GM12878 (cell line): ENCODE measurements at regions of chr11 and their contacts with region 1.

Region 1: GRCh38 chr11:7513234-7514098 is at the start of gene PPFIBP2:
- DNase-seq: no peak
- ATAC-seq: peak; percentile 80
- H3K4me3 ChIP-seq: peak within 1 kb of the TSS; percentile 92
- H3K27ac ChIP-seq: peak within 1 kb of the TSS; percentile 99
- H3K4me1 ChIP-seq: peaks cover 22% of the 10 kb centered on the region
- H3K27me3 ChIP-seq: no peaks in the 10 kb centered on the region
- CTCF ChIP-seq: peak; percentile 73 to 91 (median 81)
- EP300 ChIP-seq: peak; percentile 19 to 30; a peak in 3 of 4 replicates
- POLR2A ChIP-seq: peak; percentile 84
- RAD21 ChIP-seq: peak; percentile 90
- polyA plus RNA-seq, gene PPFIBP2: 17.3 to 22.3 TPM

Region 2: GRCh38 chr11:7088921-7089320 is 424.5 kb before region 1 on chr11 and contains the start of gene RBMXL2:
- CTCF ChIA-PET with region 1: no interaction called
- POLR2A ChIA-PET with region 1: no interaction called
- RAD21 ChIA-PET with region 1: no interaction called
- SMC1A ChIA-PET with region 1: no interaction called
- in situ Hi-C with region 1: no loop called
- intact Hi-C with region 1: no loop called
- DNase-seq: no peak
- ATAC-seq: no peak
- H3K4me3 ChIP-seq: no peak within 1 kb of the TSS
- H3K27ac ChIP-seq: no peak within 1 kb of the TSS
- H3K4me1 ChIP-seq: no peaks in the 10 kb centered on the region
- H3K27me3 ChIP-seq: no peaks in the 10 kb centered on the region; a peak in 1 of 4 replicates
- CTCF ChIP-seq: no peak
- EP300 ChIP-seq: no peak
- POLR2A ChIP-seq: no peak
- RAD21 ChIP-seq: no peak
- polyA plus RNA-seq, gene RBMXL2: not detected

Region 3: DNA sequence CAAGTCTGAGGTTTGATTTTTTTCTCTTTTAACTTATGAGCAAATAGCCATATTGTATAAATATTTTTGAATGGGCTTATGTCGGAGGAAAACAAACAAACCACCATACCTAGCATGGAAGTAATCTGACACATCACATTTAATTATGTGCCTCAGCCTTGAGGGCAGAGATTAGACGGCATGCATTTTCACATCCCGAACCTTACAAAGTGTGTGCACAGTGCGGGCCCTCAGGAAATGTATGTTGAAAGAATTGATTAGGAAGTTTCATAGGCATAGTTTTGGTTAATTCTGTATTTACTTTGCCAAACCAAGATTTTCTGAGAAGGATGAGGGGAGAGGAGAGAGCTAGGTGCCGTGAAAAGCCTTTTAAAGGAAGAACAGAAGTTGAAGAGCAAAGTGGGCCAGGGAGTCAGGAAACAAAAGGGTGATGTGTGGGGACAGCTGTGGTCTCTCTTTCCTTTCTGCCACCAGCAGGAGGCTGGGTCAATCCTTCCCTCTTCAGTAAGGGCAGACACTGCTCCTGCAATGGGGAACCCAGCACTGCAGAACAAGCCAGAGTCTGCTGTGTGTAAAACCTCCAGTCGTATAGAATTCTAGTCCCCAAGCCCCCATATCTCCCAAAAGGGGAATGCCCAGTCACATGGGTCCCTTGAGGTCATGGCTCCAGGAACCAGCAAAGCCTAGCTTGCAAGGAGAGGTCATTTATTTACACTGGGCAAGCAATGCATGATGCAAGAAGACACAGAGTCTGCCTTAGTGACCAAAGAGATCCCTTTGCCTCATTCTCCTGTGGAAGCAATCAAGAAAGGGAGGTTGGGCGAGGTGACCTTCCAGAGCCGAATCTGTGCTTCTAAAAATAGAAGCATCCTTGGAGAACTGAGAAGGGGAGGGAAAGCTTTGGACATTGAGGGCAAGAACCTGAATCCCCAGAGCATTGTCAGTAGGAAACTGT is 99.2 kb before region 1 on chr11:
- CTCF ChIA-PET with region 1: no interaction called
- POLR2A ChIA-PET with region 1: no interaction called
- RAD21 ChIA-PET with region 1: no interaction called
- SMC1A ChIA-PET with region 1: no interaction called
- in situ Hi-C with region 1: no loop called
- intact Hi-C with region 1: no loop called
- DNase-seq: no peak
- ATAC-seq: peak; percentile 43; the same call in 2 of the 3 replicates
- H3K4me3 ChIP-seq: no peak overlapping the region
- H3K27ac ChIP-seq: no peak overlapping the region
- H3K4me1 ChIP-seq: no peaks in the 10 kb centered on the region
- H3K27me3 ChIP-seq: no peaks in the 10 kb centered on the region; a peak in 1 of 4 replicates
- CTCF ChIP-seq: no peak
- EP300 ChIP-seq: no peak
- POLR2A ChIP-seq: no peak
- RAD21 ChIP-seq: no peak

Region 4: DNA sequence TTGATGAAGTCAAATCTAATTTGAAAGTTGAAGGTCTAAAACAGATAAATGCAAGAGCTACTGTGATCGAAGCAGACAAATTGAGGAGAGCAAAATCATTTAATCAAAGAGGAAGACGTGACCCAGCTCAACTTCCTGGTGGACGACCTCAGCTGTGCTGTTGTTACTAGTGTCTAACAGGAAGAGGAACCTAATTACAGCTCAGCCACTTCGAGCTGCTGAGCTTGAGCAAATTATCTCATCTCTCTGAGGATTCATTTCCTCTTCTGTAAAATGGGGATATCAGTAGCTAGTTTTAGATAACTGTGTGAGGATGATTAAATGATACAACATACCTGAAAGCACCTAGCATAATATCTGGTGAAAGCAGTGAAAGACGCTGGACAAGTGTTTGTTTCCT is 76.8 kb before region 1 on chr11:
- CTCF ChIA-PET with region 1: interaction called, 11 read pairs
- POLR2A ChIA-PET with region 1: no interaction called
- RAD21 ChIA-PET with region 1: interaction called, 7 read pairs
- SMC1A ChIA-PET with region 1: interaction called, 6 read pairs
- in situ Hi-C with region 1: no loop called
- intact Hi-C with region 1: no loop called
- DNase-seq: no peak
- ATAC-seq: peak; percentile 89
- H3K4me3 ChIP-seq: no peak overlapping the region
- H3K27ac ChIP-seq: no peak overlapping the region
- H3K4me1 ChIP-seq: 0 out of 2 replicates have a peak, but pooled peaks cover 5% of the 10 kb centered on the region
- H3K27me3 ChIP-seq: no peaks in the 10 kb centered on the region
- CTCF ChIP-seq: no peak
- EP300 ChIP-seq: no peak
- POLR2A ChIP-seq: no peak
- RAD21 ChIP-seq: no peak

Region 5: GRCh38 chr11:7457211-7457610 is 56.3 kb before region 1 on chr11:
- CTCF ChIA-PET with region 1: interaction called, 11 read pairs
- POLR2A ChIA-PET with region 1: no interaction called
- RAD21 ChIA-PET with region 1: interaction called, 4 read pairs
- SMC1A ChIA-PET with region 1: interaction called, 10 read pairs
- in situ Hi-C with region 1: no loop called
- intact Hi-C with region 1: no loop called
- DNase-seq: no peak
- ATAC-seq: no peak
- H3K4me3 ChIP-seq: no peak overlapping the region
- H3K27ac ChIP-seq: no peak overlapping the region
- H3K4me1 ChIP-seq: no peaks in the 10 kb centered on the region
- H3K27me3 ChIP-seq: no peaks in the 10 kb centered on the region
- CTCF ChIP-seq: no peak
- EP300 ChIP-seq: no peak
- POLR2A ChIP-seq: no peak
- RAD21 ChIP-seq: no peak

Region 6: DNA sequence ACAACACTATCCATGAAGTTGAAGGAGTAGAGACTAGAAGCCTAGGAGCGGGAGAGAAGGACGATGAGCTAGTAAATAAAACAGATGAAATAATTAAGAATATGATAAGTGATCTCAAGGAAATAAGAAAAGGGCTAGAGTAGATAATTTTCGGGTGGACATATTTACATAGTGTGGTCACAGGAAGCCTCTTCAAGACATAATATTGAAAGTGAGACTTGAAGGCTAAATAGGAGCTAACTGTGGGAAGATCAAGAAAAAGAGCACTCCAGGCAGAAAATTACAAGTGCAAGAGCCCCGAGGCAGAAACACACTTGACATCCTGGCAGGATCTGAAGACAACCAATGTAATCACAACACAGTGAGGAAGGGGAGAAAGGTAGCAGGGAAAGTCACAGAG is 11.6 kb before region 1 on chr11:
- CTCF ChIA-PET with region 1: interaction called, 65 read pairs
- POLR2A ChIA-PET with region 1: interaction called, 24 read pairs
- RAD21 ChIA-PET with region 1: interaction called, 21 read pairs
- SMC1A ChIA-PET with region 1: interaction called, 54 read pairs
- in situ Hi-C with region 1: no loop called
- intact Hi-C with region 1: no loop called
- DNase-seq: no peak
- ATAC-seq: peak; percentile 57
- H3K4me3 ChIP-seq: no peak overlapping the region
- H3K27ac ChIP-seq: no peak overlapping the region
- H3K4me1 ChIP-seq: peaks cover 14% of the 10 kb centered on the region; the same call in 1 of the 2 replicates
- H3K27me3 ChIP-seq: no peaks in the 10 kb centered on the region
- CTCF ChIP-seq: no peak
- EP300 ChIP-seq: no peak
- POLR2A ChIP-seq: no peak
- RAD21 ChIP-seq: no peak

Region 7: DNA sequence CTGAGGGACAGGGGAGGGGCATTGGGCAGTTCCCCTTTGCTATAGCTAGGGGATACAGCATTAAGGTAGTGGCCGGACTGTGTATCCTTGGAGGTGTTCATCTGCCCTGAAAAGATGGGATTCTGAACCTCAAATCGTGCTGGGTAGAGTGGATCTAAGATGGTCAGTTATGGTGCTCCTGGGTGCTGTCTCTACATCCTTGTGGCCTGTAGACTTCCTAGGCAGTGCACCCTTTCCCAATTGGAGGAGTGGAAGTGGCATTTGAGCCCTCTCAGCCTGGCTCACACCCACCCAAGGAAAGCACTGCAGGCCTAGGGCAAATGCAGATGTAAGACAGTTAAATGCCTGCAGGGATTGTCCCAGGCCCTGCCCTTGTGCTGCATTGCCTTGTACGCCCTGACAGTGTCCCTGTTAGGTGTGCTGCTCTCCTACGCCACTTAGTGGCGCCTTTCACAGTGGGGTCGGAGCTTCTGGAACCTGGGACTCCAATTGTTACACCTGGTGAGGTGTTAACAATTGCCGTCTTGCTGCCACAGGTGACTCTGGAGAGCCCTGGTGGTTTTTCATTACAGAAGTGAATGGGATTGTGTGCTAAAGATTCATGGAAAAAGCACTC is 35.3 kb after region 1 on chr11:
- CTCF ChIA-PET with region 1: interaction called, 33 read pairs
- POLR2A ChIA-PET with region 1: interaction called, 3 read pairs
- RAD21 ChIA-PET with region 1: interaction called, 46 read pairs
- SMC1A ChIA-PET with region 1: interaction called, 60 read pairs
- in situ Hi-C with region 1: no loop called
- intact Hi-C with region 1: loop called (anchors 1 kb)
- DNase-seq: no peak
- ATAC-seq: peak; percentile 97
- H3K4me3 ChIP-seq: no peak overlapping the region
- H3K27ac ChIP-seq: no peak overlapping the region; the same call in 1 of the 2 replicates
- H3K4me1 ChIP-seq: peaks cover 7% of the 10 kb centered on the region
- H3K27me3 ChIP-seq: no peaks in the 10 kb centered on the region
- CTCF ChIP-seq: peak; percentile 70 to 75 (median 74)
- EP300 ChIP-seq: no peak
- POLR2A ChIP-seq: no peak
- RAD21 ChIP-seq: peak; percentile 79

Region 8: GRCh38 chr11:7657306-7658025 is 144.0 kb after region 1 on chr11:
- CTCF ChIA-PET with region 1: interaction called, 13 read pairs
- POLR2A ChIA-PET with region 1: interaction called, 3 read pairs
- RAD21 ChIA-PET with region 1: interaction called, 7 read pairs
- SMC1A ChIA-PET with region 1: interaction called, 7 read pairs
- in situ Hi-C with region 1: no loop called
- intact Hi-C with region 1: no loop called
- DNase-seq: no peak
- ATAC-seq: peak; percentile 83
- H3K4me3 ChIP-seq: no peak overlapping the region
- H3K27ac ChIP-seq: no peak overlapping the region
- H3K4me1 ChIP-seq: no peaks in the 10 kb centered on the region
- H3K27me3 ChIP-seq: no peaks in the 10 kb centered on the region
- CTCF ChIP-seq: peak in 2 of 3 experiments; percentile 17 to 53; a peak in 3 of 6 replicates
- EP300 ChIP-seq: no peak
- POLR2A ChIP-seq: no peak
- RAD21 ChIP-seq: peak; percentile 51

Region 9: GRCh38 chr11:7688238-7688826 is 174.9 kb after region 1 on chr11:
- CTCF ChIA-PET with region 1: interaction called, 9 read pairs
- POLR2A ChIA-PET with region 1: no interaction called
- RAD21 ChIA-PET with region 1: no interaction called
- SMC1A ChIA-PET with region 1: interaction called, 4 read pairs
- in situ Hi-C with region 1: no loop called
- intact Hi-C with region 1: loop called (anchors 5 kb)
- DNase-seq: no peak
- ATAC-seq: peak; percentile 84
- H3K4me3 ChIP-seq: no peak overlapping the region
- H3K27ac ChIP-seq: no peak overlapping the region
- H3K4me1 ChIP-seq: no peaks in the 10 kb centered on the region
- H3K27me3 ChIP-seq: peaks cover 0 to 2% of the 10 kb centered on the region in 2 experiments; a peak in 2 of 4 replicates
- CTCF ChIP-seq: peak; percentile 76 to 80 (median 79)
- EP300 ChIP-seq: no peak
- POLR2A ChIP-seq: no peak
- RAD21 ChIP-seq: peak; percentile 80